HepG2 (cell line): ENCODE measurements at regions of chr2 and their contacts with region 1.

Region 1: GRCh38 chr2:84970868-84971509 is at the start of gene KCMF1:
- DNase-seq: no peak
- ATAC-seq: peak; percentile 70
- H3K4me3 ChIP-seq: peak within 1 kb of the TSS; percentile 81 to 99 (median 97)
- H3K27ac ChIP-seq: peak within 1 kb of the TSS; percentile 98
- H3K4me1 ChIP-seq: peaks cover 64% of the 10 kb centered on the region
- H3K27me3 ChIP-seq: no peaks in the 10 kb centered on the region; a peak in 1 of 5 replicates
- CTCF ChIP-seq: no peak
- EP300 ChIP-seq: no peak; a peak in 1 of 4 replicates
- POLR2A ChIP-seq: peak; percentile 9 to 68; a peak in 3 of 4 replicates
- RAD21 ChIP-seq: no peak
- total RNA-seq, gene KCMF1: 62.1 and 64.6 TPM in 2 replicates

Region 2: GRCh38 chr2:83787189-83787588 is 1183.8 kb before region 1 on chr2:
- CTCF ChIA-PET with region 1: no interaction called
- POLR2A ChIA-PET with region 1: no interaction called
- in situ Hi-C with region 1: no loop called
- intact Hi-C with region 1: no loop called
- DNase-seq: no peak
- ATAC-seq: no peak
- H3K4me3 ChIP-seq: no peak overlapping the region
- H3K27ac ChIP-seq: no peak overlapping the region
- H3K4me1 ChIP-seq: no peaks in the 10 kb centered on the region
- H3K27me3 ChIP-seq: no peaks in the 10 kb centered on the region
- CTCF ChIP-seq: no peak
- EP300 ChIP-seq: no peak
- POLR2A ChIP-seq: no peak
- RAD21 ChIP-seq: no peak

Region 3: GRCh38 chr2:84919885-84920580 is 51.0 kb before region 1 on chr2:
- CTCF ChIA-PET with region 1: interaction called, 3 read pairs
- POLR2A ChIA-PET with region 1: interaction called, 28 read pairs
- in situ Hi-C with region 1: loop called (anchors 5 kb)
- intact Hi-C with region 1: no loop called
- DNase-seq: peak; percentile 95
- ATAC-seq: peak; percentile 91
- H3K4me3 ChIP-seq: peak overlapping the region; percentile 32 to 56 (median 48)
- H3K27ac ChIP-seq: peak overlapping the region; percentile 72
- H3K4me1 ChIP-seq: peaks cover 35% of the 10 kb centered on the region
- H3K27me3 ChIP-seq: no peaks in the 10 kb centered on the region
- CTCF ChIP-seq: no peak
- EP300 ChIP-seq: peak; percentile 28 to 79; a peak in 2 of 4 replicates
- POLR2A ChIP-seq: peak; percentile 35 to 53; a peak in 2 of 4 replicates
- RAD21 ChIP-seq: no peak

Region 4: DNA sequence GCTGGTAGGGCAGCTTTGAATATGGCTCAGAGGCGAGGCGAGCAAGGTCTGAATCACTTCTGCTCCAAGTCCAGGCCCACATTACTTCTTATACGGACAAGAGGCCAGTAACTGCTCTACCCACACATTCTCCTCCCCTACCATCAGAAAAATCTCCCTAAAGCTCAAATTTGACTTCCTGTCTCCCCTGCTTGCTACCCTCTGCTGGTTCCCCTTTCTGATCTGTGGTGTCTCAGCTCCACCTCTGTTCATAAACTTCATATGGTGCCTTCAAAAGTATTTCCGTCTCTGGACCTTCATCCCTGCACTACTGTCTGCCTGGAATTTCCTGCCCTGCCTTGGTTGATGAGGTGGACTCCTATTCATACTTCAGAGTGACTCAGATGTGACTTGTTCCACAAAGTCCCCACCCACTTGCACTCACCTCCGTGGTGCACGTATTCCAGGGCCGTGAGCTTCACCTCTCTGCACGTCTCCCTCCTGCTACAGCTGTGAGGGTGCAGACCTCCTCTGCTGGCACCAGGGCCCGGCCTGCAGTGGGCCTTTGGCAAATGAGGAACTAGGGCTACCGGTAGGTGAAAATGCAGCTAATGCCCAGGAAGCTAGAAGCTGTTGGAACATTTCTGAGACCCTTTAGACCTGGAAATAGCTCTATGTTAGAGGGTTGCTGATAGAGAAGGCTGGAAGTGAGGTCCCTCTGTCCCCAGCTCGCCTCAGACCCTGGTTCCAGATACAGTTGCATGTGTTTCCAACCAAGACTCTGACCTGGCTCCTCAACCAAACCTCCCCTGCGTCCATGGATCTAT is 24.6 kb before region 1 on chr2:
- CTCF ChIA-PET with region 1: no interaction called
- POLR2A ChIA-PET with region 1: interaction called, 30 read pairs
- in situ Hi-C with region 1: no loop called
- intact Hi-C with region 1: no loop called
- DNase-seq: peak; percentile 96
- ATAC-seq: peak; percentile 97
- H3K4me3 ChIP-seq: peak overlapping the region; percentile 18 to 62 (median 48); a peak in 5 of 6 replicates
- H3K27ac ChIP-seq: peak overlapping the region; percentile 71
- H3K4me1 ChIP-seq: peaks cover 57% of the 10 kb centered on the region
- H3K27me3 ChIP-seq: no peaks in the 10 kb centered on the region
- CTCF ChIP-seq: peak; percentile 49
- EP300 ChIP-seq: peak in 1 of 2 experiments; percentile 66; a peak in 2 of 4 replicates
- POLR2A ChIP-seq: peak in 1 of 2 experiments; percentile 87; a peak in 3 of 4 replicates
- RAD21 ChIP-seq: peak; percentile 29; the same call in 1 of the 2 replicates

Region 5: DNA sequence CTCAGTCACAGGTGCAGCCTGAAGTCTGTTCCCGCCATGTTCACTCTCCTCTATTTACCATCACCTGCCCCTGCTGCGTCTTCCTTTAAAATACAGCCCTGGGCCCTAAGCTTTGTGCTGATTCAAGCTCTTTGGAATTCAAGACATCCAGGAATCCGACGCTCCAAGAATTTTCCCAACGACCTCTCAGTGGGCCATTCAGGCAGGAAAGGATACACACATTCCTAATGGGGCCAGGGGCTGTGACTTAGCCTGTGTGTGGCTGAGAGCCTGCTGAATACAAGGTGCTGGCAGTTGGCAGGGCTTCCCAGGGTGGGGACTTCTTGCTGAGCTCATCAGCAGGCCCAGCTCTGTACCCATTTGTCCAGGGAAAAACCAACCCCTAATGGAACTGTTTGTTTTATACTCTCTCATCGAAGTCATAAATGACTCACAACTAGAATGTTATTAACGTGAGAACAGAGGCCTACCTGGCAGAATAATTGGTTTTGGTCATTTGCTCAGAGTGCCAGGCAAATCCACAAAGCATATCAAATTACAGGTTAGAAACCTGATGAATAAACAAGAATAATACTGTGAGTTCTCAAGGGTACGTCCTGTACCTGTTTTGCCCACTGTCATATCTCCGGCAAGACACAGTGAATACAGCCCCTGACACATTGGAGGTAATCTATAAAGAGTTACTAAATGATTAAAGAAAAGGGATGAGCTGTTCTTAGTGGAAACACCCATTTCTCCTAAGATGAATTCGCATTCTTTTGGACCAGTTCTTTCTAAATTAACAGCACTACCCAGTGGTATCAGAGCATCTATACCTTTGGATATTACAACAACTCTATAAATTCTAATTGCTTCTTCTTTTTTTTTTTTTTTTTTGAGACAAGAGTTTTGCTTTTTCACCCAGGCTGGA is 12.6 kb before region 1 on chr2:
- CTCF ChIA-PET with region 1: no interaction called
- POLR2A ChIA-PET with region 1: interaction called, 22 read pairs
- in situ Hi-C with region 1: no loop called
- intact Hi-C with region 1: loop called (anchors 2 kb)
- DNase-seq: peak; percentile 80
- ATAC-seq: peak; percentile 60
- H3K4me3 ChIP-seq: 0 out of 6 replicates have a peak overlapping the region, but pooled peaks of 1 of the 3 experiments have one; percentile 0
- H3K27ac ChIP-seq: peak overlapping the region; percentile 5
- H3K4me1 ChIP-seq: peaks cover 79% of the 10 kb centered on the region
- H3K27me3 ChIP-seq: no peaks in the 10 kb centered on the region
- CTCF ChIP-seq: no peak
- EP300 ChIP-seq: no peak
- POLR2A ChIP-seq: no peak
- RAD21 ChIP-seq: no peak

Region 6: DNA sequence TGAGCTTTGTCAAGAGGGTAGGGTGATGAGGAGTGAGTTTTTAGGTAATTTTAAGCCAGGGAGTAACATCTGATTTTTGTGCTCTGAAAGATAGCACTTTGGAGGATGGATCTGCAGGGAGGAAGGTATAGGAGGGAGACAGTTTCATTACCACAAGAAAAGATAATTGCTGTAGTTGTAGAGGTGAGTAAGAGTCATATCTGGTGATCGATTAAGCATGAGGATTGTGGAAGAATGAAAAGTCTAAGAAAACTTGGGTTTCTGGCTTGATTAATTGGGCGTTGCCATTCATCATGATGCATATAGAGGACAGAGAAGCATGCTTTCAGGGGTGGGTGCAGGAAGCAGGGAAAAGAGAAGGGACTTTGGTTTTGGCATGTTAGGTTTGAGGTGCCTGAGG is 18.4 kb after region 1 on chr2:
- CTCF ChIA-PET with region 1: no interaction called
- POLR2A ChIA-PET with region 1: interaction called, 3 read pairs
- in situ Hi-C with region 1: no loop called
- intact Hi-C with region 1: loop called (anchors 2 kb)
- DNase-seq: no peak
- ATAC-seq: no peak
- H3K4me3 ChIP-seq: no peak overlapping the region
- H3K27ac ChIP-seq: no peak overlapping the region
- H3K4me1 ChIP-seq: peaks cover 44% of the 10 kb centered on the region
- H3K27me3 ChIP-seq: no peaks in the 10 kb centered on the region
- CTCF ChIP-seq: no peak
- EP300 ChIP-seq: no peak
- POLR2A ChIP-seq: no peak
- RAD21 ChIP-seq: no peak

Region 7: DNA sequence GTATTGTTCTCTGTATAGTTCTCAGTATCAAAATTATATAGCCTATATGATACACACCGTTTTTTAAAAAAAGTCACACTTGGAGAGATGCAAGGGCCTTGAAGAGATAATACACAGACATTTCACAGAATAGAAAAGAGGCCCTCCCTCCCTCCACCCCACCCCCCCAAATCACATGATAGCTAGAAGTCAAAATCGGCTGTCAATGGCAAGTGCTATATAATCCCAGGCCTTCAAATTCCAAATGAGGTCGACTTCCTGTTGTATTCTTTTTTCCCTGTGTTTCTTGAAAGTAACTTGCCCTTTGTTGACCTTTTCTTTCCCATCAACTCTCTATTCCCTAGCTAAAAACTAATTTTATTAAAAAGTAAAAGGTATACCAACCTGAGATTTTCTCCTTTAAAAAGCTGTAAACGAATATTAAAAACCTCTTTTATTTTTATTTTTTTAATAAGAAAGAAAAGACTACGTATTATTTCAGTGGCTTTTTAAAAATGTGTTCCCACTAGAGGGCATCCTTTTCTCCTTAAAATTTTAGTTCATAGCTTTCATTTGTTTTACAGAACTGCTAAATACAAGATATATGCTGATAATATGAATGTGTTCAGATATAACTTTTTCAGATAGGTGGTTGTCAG is 46.5 kb after region 1 on chr2:
- CTCF ChIA-PET with region 1: no interaction called
- POLR2A ChIA-PET with region 1: no interaction called
- in situ Hi-C with region 1: no loop called
- intact Hi-C with region 1: loop called (anchors 1 kb)
- DNase-seq: no peak
- ATAC-seq: no peak
- H3K4me3 ChIP-seq: no peak overlapping the region
- H3K27ac ChIP-seq: no peak overlapping the region
- H3K4me1 ChIP-seq: peaks cover 23% of the 10 kb centered on the region
- H3K27me3 ChIP-seq: no peaks in the 10 kb centered on the region
- CTCF ChIP-seq: peak; percentile 17; the same call in 1 of the 2 replicates
- EP300 ChIP-seq: no peak
- POLR2A ChIP-seq: no peak
- RAD21 ChIP-seq: no peak

Region 8: DNA sequence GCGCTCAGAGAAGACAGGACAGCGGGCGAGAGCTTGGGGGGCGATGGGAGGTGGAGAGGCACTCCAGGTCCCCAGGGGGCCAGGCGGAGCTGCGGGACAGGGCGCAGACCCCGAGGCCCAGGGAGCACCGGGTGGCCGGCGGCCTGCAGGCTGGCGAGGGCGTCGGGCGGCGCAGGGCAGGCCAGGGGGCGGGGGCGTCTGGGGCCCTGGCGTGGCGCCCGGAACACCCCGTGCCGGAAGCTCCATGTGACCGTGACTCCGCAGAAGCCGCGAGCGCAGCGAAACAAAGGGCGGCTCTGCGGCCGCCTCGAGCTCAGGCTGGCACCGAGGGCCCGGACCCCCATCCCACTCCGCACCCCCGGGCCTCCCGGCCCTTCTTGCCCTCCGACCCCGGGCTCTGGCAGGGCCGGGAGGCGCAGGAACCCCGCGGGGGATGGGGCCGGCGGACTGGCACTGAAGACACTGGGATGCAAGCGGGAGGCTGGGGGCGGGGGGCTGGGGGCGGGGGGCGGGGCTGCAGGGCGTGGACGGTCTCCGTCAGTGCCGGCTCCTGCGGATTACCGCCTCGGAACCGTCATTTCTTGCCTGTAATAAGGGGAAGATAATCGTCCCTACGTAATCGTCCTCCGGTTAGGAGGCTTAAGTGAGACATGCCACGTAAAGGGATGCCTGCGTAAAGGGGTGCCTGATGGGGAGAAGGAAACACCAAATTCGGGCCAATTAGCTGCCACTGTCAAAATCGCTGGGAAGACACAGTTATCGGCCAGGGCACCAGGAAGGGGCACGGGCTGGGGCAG is 466.7 kb after region 1 on chr2:
- CTCF ChIA-PET with region 1: no interaction called
- POLR2A ChIA-PET with region 1: no interaction called
- in situ Hi-C with region 1: no loop called
- intact Hi-C with region 1: no loop called
- DNase-seq: no peak
- ATAC-seq: no peak
- H3K4me3 ChIP-seq: no peak overlapping the region
- H3K27ac ChIP-seq: no peak overlapping the region
- H3K4me1 ChIP-seq: peaks cover 28% of the 10 kb centered on the region
- H3K27me3 ChIP-seq: peaks cover 9 to 67% of the 10 kb centered on the region in 2 experiments
- CTCF ChIP-seq: no peak
- EP300 ChIP-seq: no peak
- POLR2A ChIP-seq: no peak
- RAD21 ChIP-seq: no peak